ENCODE measurements at regions of chr3 and their contacts with region 1.

Region 1: GRCh38 chr3:15815696-15816095 is 17.9 kb upstream of the ANKRD28 start:
- DNase-seq: peak; percentile 59
- H3K4me3 ChIP-seq: no peak overlapping the region
- H3K27ac ChIP-seq: no peak overlapping the region
- H3K4me1 ChIP-seq: peaks cover 30% of the 10 kb centered on the region
- CTCF ChIP-seq: peak; percentile 78

Region 2: GRCh38 chr3:15859507-15860013 is 43.9 kb after region 1 on chr3:
- CTCF ChIA-PET with region 1: no interaction called
- POLR2A ChIA-PET with region 1: no interaction called
- intact Hi-C with region 1: loop called (anchors 2 kb)
- DNase-seq: peak; percentile 91
- H3K4me3 ChIP-seq: peak overlapping the region; percentile 96
- H3K27ac ChIP-seq: peak overlapping the region; percentile 80
- H3K4me1 ChIP-seq: peaks cover 44% of the 10 kb centered on the region
- CTCF ChIP-seq: no peak

Region 3: GRCh38 chr3:16177962-16178627 is 362.4 kb after region 1 on chr3:
- CTCF ChIA-PET with region 1: no interaction called
- POLR2A ChIA-PET with region 1: no interaction called
- intact Hi-C with region 1: loop called (anchors 5 kb)
- DNase-seq: peak; percentile 53
- H3K4me3 ChIP-seq: no peak overlapping the region
- H3K27ac ChIP-seq: no peak overlapping the region
- H3K4me1 ChIP-seq: no peaks in the 10 kb centered on the region
- CTCF ChIP-seq: peak; percentile 92

Region 4: DNA sequence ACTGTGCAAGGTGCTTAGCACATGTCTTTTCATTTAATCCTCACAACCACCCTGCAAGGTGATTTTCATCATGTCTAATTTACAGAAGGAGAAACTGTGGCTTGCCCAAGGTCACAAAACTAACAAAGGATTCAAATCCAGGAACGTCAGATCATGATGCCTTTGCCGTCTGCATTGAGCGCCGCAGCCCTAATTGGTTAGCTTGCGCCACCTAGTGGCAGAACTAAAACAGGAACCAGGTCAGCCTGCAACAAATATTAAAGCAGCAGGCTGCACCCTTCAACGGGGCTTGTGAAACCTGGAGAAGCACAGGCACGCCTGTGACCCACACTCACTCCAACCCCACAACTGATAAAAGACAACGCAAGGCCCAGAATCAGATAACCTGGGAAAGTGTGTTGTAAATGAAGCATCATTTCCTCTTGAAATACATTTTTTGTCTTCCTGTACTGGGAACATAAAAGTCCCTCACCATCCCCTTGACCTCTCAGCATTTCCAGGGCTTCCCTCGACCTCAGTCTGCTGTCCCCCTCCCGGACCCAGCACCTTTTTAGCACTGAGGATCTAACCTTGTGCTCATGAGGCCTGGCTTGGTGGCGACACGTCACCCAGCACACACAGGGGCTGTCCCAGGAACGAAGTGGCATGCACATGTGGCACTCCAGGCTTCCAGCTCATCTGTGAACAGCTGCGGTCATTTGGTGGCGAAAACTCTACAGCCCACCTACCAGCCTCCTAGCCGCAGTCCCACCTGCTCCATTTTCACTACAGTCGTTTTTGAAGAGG is 431.8 kb after region 1 on chr3:
- CTCF ChIA-PET with region 1: no interaction called
- POLR2A ChIA-PET with region 1: no interaction called
- intact Hi-C with region 1: loop called (anchors 5 kb)
- DNase-seq: peak; percentile 88
- H3K4me3 ChIP-seq: no peak overlapping the region
- H3K27ac ChIP-seq: no peak overlapping the region
- H3K4me1 ChIP-seq: peaks cover 6% of the 10 kb centered on the region
- CTCF ChIP-seq: peak; percentile 97

Measured in OCI-LY7 (cell line).